Activated CD4-positive, alpha-beta T cell treated with anti-CD3 and anti-CD28 coated beads, Interleukin-2, amount 10 ng/mL, durations not matched to agents 7 days and 5 days (primary cell): ENCODE measurements at regions of chr3 and their contacts with region 1.

Region 1: DNA sequence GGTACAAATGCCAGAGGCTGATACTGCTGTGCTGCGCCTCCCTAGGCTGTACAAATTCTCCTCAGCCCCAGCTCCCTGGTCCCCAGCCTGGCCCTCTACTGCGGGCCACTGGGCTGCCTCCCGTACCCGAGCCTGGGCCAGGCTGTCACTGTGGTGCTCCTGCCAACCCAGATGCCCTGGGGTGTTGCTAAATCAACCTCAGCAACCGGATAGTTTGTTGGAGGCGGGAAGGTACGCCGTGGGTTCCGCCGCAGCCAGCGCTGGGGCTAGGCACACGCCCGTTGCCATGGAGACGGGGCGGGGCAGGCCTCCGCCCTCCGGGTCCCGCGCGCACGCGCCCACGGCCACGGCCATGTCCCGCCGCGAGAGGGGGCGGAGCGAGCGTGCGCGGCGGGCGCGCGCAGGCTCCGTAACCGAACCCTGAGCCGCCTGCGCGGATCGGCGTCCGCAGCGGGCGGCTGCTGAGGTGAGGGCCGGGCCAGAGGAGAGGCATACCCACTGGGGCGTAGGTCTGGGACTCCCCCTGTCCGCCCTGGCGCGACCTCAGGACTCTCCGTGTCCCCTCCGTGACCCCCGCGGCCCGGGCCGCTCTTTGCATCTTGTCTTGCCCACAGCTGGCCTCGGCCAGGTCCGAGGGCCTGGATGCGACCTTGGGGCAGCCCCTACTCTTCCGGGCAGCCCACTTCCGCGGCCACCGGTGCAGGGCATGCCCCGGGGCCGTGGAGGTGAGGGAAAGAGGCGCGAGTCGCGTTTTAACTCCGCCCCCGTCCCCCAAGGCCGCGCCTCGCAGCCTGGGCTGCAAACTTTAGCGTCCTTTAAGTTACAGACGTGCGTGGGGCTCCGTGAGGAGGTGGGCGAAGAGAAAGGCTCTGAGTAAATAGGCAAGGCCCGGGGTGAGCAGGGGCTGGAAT is at the start of gene TEX264:
- DNase-seq: peak; percentile 95
- H3K4me3 Mint-ChIP-seq: peak within 1 kb of the TSS; percentile 80
- H3K27ac Mint-ChIP-seq: peak within 1 kb of the TSS; percentile 87
- H3K4me1 Mint-ChIP-seq: peaks cover 69% of the 10 kb centered on the region
- H3K27me3 Mint-ChIP-seq: no peaks in the 10 kb centered on the region
- total RNA-seq, gene TEX264: 75.2 to 81.4 TPM

Region 2: GRCh38 chr3:51391075-51391567 is 280.0 kb before region 1 on chr3 and contains the start of gene RBM15B:
- CTCF ChIA-PET with region 1: interaction called, 14 read pairs
- POLR2A ChIA-PET with region 1: no interaction called
- DNase-seq: peak; percentile 97
- H3K4me3 Mint-ChIP-seq: peak within 1 kb of the TSS; percentile 83
- H3K27ac Mint-ChIP-seq: peak within 1 kb of the TSS; percentile 93
- H3K4me1 Mint-ChIP-seq: peaks cover 78% of the 10 kb centered on the region
- H3K27me3 Mint-ChIP-seq: no peaks in the 10 kb centered on the region
- total RNA-seq, gene RBM15B: 29.0 to 29.8 TPM

Region 3: DNA sequence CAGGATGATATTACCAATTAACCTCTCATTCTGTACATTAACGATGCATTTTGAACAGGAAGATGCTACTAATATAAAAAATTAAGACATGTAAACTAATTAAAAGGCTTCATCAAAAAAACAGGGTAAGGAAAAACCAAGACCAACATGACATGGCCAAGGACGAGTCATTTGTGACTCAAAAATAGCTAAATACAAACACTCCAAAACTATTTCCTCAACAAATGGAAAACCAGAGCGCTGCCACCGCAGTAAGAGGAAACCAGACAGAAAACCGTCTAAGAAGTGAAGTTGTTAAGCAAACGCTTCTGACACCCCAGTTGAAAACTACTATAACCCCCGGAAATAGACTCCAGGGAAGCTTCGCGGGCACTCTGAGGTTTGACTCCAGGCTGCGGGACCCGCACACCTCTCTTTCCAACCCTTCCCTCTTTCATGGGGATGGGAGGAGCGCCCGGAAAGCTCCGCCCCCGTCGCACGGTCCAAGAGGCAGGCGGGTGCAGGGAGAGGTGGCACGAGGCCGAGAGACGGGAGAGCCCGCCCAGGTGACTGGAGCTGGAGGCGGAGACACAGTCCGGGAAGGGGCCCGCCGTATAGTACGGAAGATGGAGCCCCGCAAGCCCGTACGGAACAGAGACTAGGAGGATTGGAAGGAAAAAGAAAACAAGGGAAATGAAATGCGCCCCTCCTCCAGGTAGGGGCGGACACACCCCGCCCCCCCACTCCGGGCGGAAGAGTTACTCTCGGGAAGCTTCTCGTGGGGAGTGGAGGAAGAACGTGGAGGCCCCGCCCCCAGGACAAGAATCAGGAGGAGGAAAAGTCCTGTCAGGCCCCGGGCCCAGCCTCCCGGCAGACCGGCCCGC is 172.0 kb before region 1 on chr3:
- CTCF ChIA-PET with region 1: interaction called, 44 read pairs
- POLR2A ChIA-PET with region 1: interaction called, 8 read pairs
- DNase-seq: peak; percentile 89
- H3K4me3 Mint-ChIP-seq: peak overlapping the region; percentile 100
- H3K27ac Mint-ChIP-seq: peak overlapping the region; percentile 97
- H3K4me1 Mint-ChIP-seq: peaks cover 28% of the 10 kb centered on the region
- H3K27me3 Mint-ChIP-seq: no peaks in the 10 kb centered on the region

Region 4: DNA sequence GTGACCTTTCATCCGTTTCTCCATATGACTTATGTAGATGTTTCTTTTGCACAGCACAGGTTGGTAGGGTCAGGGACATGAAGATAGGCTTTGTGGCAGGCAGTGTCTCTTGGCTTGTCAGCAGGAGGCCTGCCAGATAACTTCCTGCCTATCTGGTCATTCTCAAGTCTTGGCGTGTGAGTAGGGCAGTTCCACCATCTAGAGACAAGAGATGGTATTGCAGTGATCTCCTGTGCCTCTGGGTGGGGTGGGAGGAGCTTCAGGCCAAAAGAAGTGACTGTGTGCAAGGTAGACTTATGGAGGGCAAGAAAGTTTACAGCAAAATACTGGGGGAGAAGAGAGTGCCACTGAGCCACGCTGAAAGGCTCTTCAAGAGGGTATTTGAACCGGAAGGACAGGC is 11.0 kb after region 1 on chr3:
- CTCF ChIA-PET with region 1: interaction called, 144 read pairs
- POLR2A ChIA-PET with region 1: interaction called, 7 read pairs
- DNase-seq: peak; percentile 89
- H3K4me3 Mint-ChIP-seq: peak overlapping the region; percentile 70
- H3K27ac Mint-ChIP-seq: peak overlapping the region; percentile 77
- H3K4me1 Mint-ChIP-seq: peaks cover 94% of the 10 kb centered on the region
- H3K27me3 Mint-ChIP-seq: no peaks in the 10 kb centered on the region

Region 5: GRCh38 chr3:51819709-51820406 is 148.8 kb after region 1 on chr3:
- CTCF ChIA-PET with region 1: no interaction called
- POLR2A ChIA-PET with region 1: no interaction called
- DNase-seq: no peak
- H3K4me3 Mint-ChIP-seq: no peak overlapping the region
- H3K27ac Mint-ChIP-seq: no peak overlapping the region
- H3K4me1 Mint-ChIP-seq: peaks cover 14% of the 10 kb centered on the region
- H3K27me3 Mint-ChIP-seq: peaks cover 29% of the 10 kb centered on the region